T-cell (primary cell): ENCODE measurements at regions of chr1 and their contacts with region 1.

Region 1: DNA sequence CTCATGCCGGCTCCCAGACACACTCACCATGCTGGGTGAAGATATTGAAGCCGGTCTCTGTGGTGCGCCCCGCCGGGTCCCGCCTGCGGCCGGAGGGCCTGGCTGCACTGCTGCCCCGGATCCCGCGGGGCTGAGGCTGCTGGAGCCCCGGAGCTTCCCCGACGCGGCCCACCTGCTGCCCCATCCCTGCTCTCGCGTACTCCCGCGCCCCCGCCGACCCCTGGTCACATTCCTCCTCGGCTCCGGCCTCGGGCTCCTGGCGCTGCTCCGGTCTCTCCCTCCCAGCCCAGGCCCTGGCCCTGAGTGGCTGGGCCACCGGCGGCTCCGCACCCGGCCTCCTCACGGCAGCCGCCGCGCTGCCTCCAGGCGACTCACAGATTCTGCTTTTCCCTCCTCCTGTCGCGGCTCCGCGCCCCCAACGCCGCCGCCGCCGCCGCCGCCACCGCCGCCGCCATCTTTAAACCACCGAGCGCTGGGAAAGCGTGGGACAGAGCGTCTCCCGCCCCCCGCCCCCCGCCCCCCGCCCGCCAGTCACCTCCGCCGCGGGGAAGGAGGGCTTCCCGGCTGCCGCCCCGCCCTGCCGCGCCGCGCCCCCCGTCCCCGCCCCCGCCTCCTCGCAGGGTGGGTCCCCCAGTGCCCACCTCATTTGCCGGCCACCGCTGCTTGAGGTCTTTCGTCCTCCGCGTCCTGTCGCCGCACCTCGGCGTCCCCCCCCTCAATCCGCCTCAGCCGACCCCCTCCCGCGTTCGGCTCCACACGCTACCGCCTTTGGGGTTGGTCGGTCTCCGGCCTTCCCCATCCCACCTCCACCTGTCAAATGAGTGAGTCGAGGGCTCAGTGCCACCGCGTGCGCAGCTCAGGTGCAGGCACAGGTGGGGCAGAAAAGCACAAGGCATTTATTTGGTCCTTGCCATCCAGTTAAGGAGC is at the start of gene ABL2:
- DNase-seq: peak in 34 of 35 experiments; percentile 7 to 71 (median 34)
- ATAC-seq: peak; percentile 69 to 74 (median 73)
- H3K4me3 ChIP-seq: peak within 1 kb of the TSS; percentile 58 to 78
- H3K4me3 Mint-ChIP-seq: peak within 1 kb of the TSS; percentile 89 to 93 (median 93)
- H3K27ac ChIP-seq: peak within 1 kb of the TSS; percentile 54
- H3K27ac Mint-ChIP-seq: peak within 1 kb of the TSS; percentile 80 to 93
- H3K4me1 ChIP-seq: peaks cover 9 to 15% of the 10 kb centered on the region in 2 experiments
- H3K4me1 Mint-ChIP-seq: peaks cover 38 to 40% (median 40%) of the 10 kb centered on the region in 3 donors
- H3K27me3 ChIP-seq: no peaks in the 10 kb centered on the region
- H3K27me3 Mint-ChIP-seq: no peaks in the 10 kb centered on the region
- total RNA-seq, gene ABL2: 14.9 to 20.0 (median 15.9) TPM

Region 2: DNA sequence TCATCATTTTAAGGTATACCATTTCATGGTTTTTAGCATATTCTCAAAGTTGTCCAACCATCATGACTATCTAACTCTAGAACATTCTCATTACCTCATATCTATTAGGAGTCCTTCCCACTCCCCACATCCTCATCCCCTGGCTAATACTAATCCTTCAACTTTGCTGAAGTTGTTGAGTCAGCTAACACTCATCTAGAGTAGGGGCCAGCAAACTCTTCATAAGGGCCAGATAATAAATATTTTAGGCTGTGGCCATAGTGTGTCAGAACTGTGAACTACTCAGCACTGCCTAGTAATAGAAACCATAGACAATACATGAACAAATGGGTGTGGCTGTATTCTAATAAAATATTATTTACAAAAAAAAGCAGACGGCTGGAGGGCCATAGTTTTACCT is 104.6 kb before region 1 on chr1:
- CTCF ChIA-PET with region 1: no interaction called
- POLR2A ChIA-PET with region 1: no interaction called
- DNase-seq: no peak
- ATAC-seq: no peak
- H3K4me3 ChIP-seq: no peak overlapping the region
- H3K4me3 Mint-ChIP-seq: no peak overlapping the region
- H3K27ac ChIP-seq: no peak overlapping the region
- H3K27ac Mint-ChIP-seq: no peak overlapping the region
- H3K4me1 ChIP-seq: peaks cover 2 to 11% of the 10 kb centered on the region in 2 experiments
- H3K4me1 Mint-ChIP-seq: peaks cover 9 to 17% (median 16%) of the 10 kb centered on the region in 3 donors
- H3K27me3 ChIP-seq: no peaks in the 10 kb centered on the region
- H3K27me3 Mint-ChIP-seq: no peaks in the 10 kb centered on the region

Region 3: DNA sequence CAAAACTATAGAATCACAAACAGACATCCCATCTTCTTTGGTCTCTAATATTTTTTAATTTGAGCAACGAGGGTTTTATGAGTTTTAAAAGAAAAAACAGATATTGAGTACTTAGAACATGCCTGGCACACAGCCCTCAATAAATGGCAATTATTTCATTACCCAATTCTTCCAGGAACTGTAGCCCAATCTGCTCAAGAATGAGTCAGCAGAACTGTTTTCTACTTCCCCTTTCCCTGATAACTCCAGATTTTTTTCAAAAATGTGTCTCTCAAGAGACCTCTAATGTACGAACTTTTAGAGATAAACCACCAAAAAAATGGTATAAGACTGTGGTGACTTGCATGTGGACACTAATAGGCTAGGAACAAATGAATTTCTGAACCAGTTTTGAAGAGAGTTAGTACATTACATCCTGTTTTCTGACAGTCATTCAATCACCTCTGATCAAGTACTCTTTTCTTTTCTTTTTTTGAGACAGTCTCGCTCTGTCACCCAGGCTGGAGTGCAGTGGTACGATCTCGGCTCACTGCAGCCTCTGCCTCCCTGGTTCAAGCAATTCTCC is 11.5 kb before region 1 on chr1:
- CTCF ChIA-PET with region 1: interaction called, 3 to 10 read pairs
- POLR2A ChIA-PET with region 1: no interaction called
- DNase-seq: no peak
- ATAC-seq: no peak
- H3K4me3 ChIP-seq: no peak overlapping the region
- H3K4me3 Mint-ChIP-seq: no peak overlapping the region
- H3K27ac ChIP-seq: no peak overlapping the region
- H3K27ac Mint-ChIP-seq: peak overlapping the region in 1 of 2 donors; percentile 44
- H3K4me1 ChIP-seq: no peaks in the 10 kb centered on the region
- H3K4me1 Mint-ChIP-seq: peaks cover 16 to 22% (median 18%) of the 10 kb centered on the region in 3 donors
- H3K27me3 ChIP-seq: no peaks in the 10 kb centered on the region
- H3K27me3 Mint-ChIP-seq: no peaks in the 10 kb centered on the region

Region 4: GRCh38 chr1:179996099-179996498 is 766.6 kb after region 1 on chr1:
- CTCF ChIA-PET with region 1: no interaction called
- POLR2A ChIA-PET with region 1: no interaction called
- DNase-seq: no peak
- ATAC-seq: no peak
- H3K4me3 ChIP-seq: no peak overlapping the region
- H3K4me3 Mint-ChIP-seq: no peak overlapping the region
- H3K27ac ChIP-seq: no peak overlapping the region
- H3K27ac Mint-ChIP-seq: no peak overlapping the region
- H3K4me1 ChIP-seq: no peaks in the 10 kb centered on the region
- H3K4me1 Mint-ChIP-seq: peaks cover 0 to 6% (median 6%) of the 10 kb centered on the region in 3 donors
- H3K27me3 ChIP-seq: no peaks in the 10 kb centered on the region
- H3K27me3 Mint-ChIP-seq: no peaks in the 10 kb centered on the region